ENCODE measurements at regions of chr5 and their contacts with region 1.

Region 1: GRCh38 chr5:177403792-177404640 is 3.6 kb upstream of the PFN3 start:
- DNase-seq: peak; percentile 94
- H3K4me3 ChIP-seq: peak overlapping the region; percentile 60 to 83
- H3K27ac ChIP-seq: peak overlapping the region in 1 of 2 experiments; percentile 96; a peak in 2 of 4 replicates
- H3K4me1 ChIP-seq: peaks cover 0 to 28% of the 10 kb centered on the region in 2 experiments; a peak in 1 of 4 replicates
- H3K27me3 ChIP-seq: no peaks in the 10 kb centered on the region
- CTCF ChIP-seq: peak; percentile 72
- EP300 ChIP-seq: no peak; a peak in 1 of 4 replicates
- RAD21 ChIP-seq: peak; percentile 81

Region 2: GRCh38 chr5:177311723-177312648 is 92.0 kb before region 1 on chr5 and contains the start of gene MXD3:
- CTCF ChIA-PET with region 1: interaction called, 18 read pairs
- POLR2A ChIA-PET with region 1: no interaction called
- DNase-seq: peak; percentile 97
- H3K4me3 ChIP-seq: peak within 1 kb of the TSS; percentile 59 to 84
- H3K27ac ChIP-seq: peak within 1 kb of the TSS; percentile 73 to 88
- H3K4me1 ChIP-seq: peaks cover 4 to 25% of the 10 kb centered on the region in 2 experiments; a peak in 1 of 4 replicates
- H3K27me3 ChIP-seq: no peaks in the 10 kb centered on the region
- CTCF ChIP-seq: no peak
- EP300 ChIP-seq: 0 out of 4 replicates have a peak, but pooled peaks of 1 of the 2 experiments have one; percentile 39
- RAD21 ChIP-seq: no peak
- polyA plus RNA-seq, gene MXD3: 22.6 and 23.1 TPM in 2 replicates

Region 3: DNA sequence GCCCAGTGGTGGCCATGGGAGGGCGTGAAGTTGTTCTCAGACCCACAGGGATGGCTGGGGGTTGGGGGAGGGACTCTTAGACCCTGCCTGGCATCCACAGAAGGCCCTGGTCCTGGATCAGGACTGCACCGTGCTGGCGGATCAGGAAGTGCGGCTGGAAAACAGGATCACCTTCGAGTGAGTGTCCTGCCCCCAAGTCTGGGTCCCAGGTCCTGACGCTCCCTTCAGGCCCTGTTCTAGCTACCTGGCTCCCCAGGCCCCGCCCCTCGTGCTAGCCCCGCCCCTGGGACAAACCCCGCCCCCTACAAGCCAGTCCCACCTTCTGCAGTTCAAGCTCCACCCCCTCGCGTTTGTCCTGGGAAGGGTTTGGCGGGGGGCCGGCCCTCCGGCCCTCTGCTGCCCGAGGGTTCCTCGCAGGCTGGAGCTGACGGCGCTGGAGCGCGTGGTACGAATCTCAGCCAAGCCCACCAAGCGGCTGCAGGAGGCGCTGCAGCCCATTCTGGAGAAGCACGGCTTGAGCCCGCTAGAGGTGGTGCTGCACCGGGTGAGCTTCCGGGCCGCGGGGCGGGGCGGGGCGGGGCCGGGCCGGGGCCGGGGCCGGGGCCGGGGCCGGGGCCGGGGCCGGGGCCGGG is 33.4 kb before region 1 on chr5:
- CTCF ChIA-PET with region 1: interaction called, 30 read pairs
- POLR2A ChIA-PET with region 1: interaction called, 3 read pairs
- DNase-seq: peak; percentile 92
- H3K4me3 ChIP-seq: peak overlapping the region; percentile 55 to 56; a peak in 3 of 4 replicates
- H3K27ac ChIP-seq: no peak overlapping the region
- H3K4me1 ChIP-seq: peaks cover 6 to 37% of the 10 kb centered on the region in 2 experiments; a peak in 3 of 4 replicates
- H3K27me3 ChIP-seq: no peaks in the 10 kb centered on the region
- CTCF ChIP-seq: peak; percentile 49
- EP300 ChIP-seq: no peak
- RAD21 ChIP-seq: peak; percentile 37; the same call in 1 of the 2 replicates

Region 4: GRCh38 chr5:177425801-177426565 is 22.0 kb after region 1 on chr5:
- CTCF ChIA-PET with region 1: interaction called, 120 read pairs
- POLR2A ChIA-PET with region 1: interaction called, 11 read pairs
- DNase-seq: peak; percentile 99
- H3K4me3 ChIP-seq: peak overlapping the region; percentile 53 to 68
- H3K27ac ChIP-seq: peak overlapping the region; percentile 89 to 92
- H3K4me1 ChIP-seq: peaks cover 5 to 33% of the 10 kb centered on the region in 2 experiments; a peak in 2 of 4 replicates
- H3K27me3 ChIP-seq: no peaks in the 10 kb centered on the region
- CTCF ChIP-seq: no peak
- EP300 ChIP-seq: no peak
- RAD21 ChIP-seq: no peak

Region 5: DNA sequence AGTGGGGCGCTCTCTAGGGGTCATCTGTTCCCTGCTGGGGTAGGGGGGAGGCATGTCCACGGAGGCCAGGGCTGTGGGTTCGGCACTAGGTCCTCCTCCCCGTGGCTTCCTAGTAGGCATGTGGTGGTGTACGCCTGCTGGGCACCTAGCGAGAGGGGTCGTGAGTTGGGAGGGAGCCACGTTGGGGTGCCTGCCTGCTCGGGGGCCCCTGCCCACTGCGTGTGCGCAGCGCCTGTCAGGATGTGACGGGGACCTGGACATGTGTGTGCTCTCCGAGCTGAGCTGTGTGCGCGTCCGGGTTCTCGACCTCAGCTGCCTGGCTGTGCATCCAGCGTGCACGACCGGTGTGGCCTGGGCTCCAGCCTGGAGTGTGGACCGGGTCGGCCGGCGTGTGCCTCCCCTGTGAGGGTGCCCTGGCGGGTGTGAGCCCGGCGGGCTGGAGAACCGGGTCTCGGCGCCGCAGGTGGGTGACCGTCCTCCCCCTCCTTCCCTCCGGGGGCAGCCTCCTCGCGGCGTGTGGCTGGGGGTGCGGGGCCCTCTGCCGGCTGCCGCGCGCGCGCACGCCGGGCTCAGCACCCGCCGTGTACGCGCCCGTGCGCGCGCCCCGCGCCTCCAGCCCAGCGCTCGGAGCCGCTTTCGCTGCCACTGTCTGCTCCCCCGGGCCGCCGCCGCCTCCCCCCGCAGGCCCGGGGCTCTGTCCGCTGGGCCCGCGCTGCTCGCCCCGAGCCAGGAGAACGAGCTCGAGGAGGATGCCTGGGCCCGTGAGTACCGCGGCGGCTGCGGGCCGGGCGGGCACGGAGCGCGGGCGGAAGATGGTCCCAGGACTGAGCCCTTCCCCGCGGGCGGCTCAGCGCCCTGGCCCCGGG is 42.4 kb after region 1 on chr5 and contains the start of gene PRR7:
- CTCF ChIA-PET with region 1: interaction called, 375 read pairs
- POLR2A ChIA-PET with region 1: interaction called, 46 read pairs
- DNase-seq: peak; percentile 95
- H3K4me3 ChIP-seq: peak within 1 kb of the TSS; percentile 69 to 77
- H3K27ac ChIP-seq: peak within 1 kb of the TSS; percentile 93 to 96
- H3K4me1 ChIP-seq: peaks cover 23 to 41% of the 10 kb centered on the region in 2 experiments
- H3K27me3 ChIP-seq: no peaks in the 10 kb centered on the region
- CTCF ChIP-seq: no peak
- EP300 ChIP-seq: no peak
- RAD21 ChIP-seq: no peak
- polyA plus RNA-seq, gene PRR7: 12.5 and 17.1 TPM in 2 replicates

Region 6: DNA sequence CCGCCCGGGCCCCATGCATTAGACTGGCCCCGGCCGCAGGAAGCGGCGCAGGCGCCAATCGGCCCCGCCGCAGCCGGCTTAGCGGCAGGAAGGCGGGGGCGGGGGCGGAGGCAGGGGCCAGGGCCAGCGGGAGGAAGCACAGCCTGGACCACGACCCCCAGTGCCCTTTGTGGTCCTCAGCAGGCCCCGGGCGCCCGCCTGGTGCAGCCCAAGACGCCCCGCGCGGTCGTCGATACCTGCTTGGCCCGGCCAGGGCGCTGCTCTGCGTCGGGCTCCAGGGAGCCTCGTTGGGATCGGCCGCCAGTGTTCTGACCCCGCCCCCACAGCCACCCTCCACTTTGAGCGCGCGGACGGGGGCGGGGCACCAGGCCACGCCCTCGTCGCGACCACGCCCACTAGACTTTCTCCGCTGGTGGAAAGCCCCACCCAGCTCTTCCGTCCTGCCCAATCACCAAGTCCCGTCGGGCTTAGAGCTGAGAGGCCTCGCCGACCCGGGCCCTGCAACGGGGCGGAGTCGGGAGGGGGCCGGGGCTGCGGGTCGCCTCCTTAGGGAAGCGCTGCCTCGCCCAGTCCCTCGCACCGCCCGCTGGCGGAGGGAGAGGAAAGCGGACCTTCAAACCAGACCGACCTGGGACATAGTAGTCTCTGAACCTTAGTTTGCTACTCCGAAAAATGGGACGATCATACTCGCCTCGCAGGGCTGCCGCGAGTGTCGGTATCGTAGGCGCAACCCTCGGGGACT is 93.4 kb after region 1 on chr5 and contains the start of gene PDLIM7:
- CTCF ChIA-PET with region 1: interaction called, 109 read pairs
- POLR2A ChIA-PET with region 1: interaction called, 8 read pairs
- DNase-seq: peak; percentile 98
- H3K4me3 ChIP-seq: peak within 1 kb of the TSS; percentile 83 to 94
- H3K27ac ChIP-seq: peak within 1 kb of the TSS; percentile 80 to 94
- H3K4me1 ChIP-seq: peaks cover 32 to 62% of the 10 kb centered on the region in 2 experiments; a peak in 3 of 4 replicates
- H3K27me3 ChIP-seq: no peaks in the 10 kb centered on the region
- CTCF ChIP-seq: no peak; the same call in 1 of the 2 replicates
- EP300 ChIP-seq: no peak
- RAD21 ChIP-seq: no peak
- polyA plus RNA-seq, gene PDLIM7: 183 and 206 TPM in 2 replicates